B cell (primary cell): ENCODE measurements at regions of chr17 and their contacts with region 1.

Region 1: GRCh38 chr17:60077672-60078519 is 825 bp downstream of the HEATR6 start:
- DNase-seq: peak; percentile 60
- ATAC-seq: peak; percentile 52
- H3K4me3 ChIP-seq: peak overlapping the region; percentile 45 to 73 (median 61)
- H3K4me3 Mint-ChIP-seq: peak overlapping the region; percentile 94
- H3K27ac ChIP-seq: peak overlapping the region; percentile 55 to 65
- H3K27ac Mint-ChIP-seq: peak overlapping the region; percentile 93
- H3K4me1 ChIP-seq: peaks cover 27 to 32% of the 10 kb centered on the region in 2 donors
- H3K4me1 Mint-ChIP-seq: peaks cover 39% of the 10 kb centered on the region
- H3K27me3 ChIP-seq: no peaks in the 10 kb centered on the region
- H3K27me3 Mint-ChIP-seq: no peaks in the 10 kb centered on the region
- CTCF ChIP-seq: no peak

Region 2: DNA sequence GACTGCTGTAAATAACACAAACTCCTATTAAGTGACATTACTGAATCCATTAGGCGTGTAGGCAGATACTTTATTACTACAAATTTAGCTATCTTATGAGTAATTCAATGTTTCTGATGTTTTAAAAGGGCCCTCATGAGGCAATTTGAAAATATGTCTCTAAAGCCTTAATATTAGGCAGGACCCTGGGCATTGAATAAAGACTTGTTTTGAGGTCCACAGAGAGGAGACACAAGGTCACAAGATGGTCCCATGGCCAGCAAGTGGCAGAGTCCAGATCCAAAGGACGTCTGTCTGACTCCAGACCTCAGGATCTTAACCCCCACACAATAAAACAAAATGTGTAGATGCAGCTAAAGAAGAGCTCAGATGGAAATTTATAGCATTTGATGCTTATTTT is 32.7 kb after region 1 on chr17:
- CTCF ChIA-PET with region 1: interaction called, 12 read pairs
- POLR2A ChIA-PET with region 1: no interaction called
- intact Hi-C with region 1: no loop called
- DNase-seq: no peak
- ATAC-seq: no peak
- H3K4me3 ChIP-seq: no peak overlapping the region
- H3K4me3 Mint-ChIP-seq: no peak overlapping the region
- H3K27ac ChIP-seq: no peak overlapping the region
- H3K27ac Mint-ChIP-seq: no peak overlapping the region
- H3K4me1 ChIP-seq: peaks cover 12% of the 10 kb centered on the region in 2 donors
- H3K4me1 Mint-ChIP-seq: peaks cover 17% of the 10 kb centered on the region
- H3K27me3 ChIP-seq: no peaks in the 10 kb centered on the region
- H3K27me3 Mint-ChIP-seq: peaks cover 3% of the 10 kb centered on the region
- CTCF ChIP-seq: no peak

Region 3: DNA sequence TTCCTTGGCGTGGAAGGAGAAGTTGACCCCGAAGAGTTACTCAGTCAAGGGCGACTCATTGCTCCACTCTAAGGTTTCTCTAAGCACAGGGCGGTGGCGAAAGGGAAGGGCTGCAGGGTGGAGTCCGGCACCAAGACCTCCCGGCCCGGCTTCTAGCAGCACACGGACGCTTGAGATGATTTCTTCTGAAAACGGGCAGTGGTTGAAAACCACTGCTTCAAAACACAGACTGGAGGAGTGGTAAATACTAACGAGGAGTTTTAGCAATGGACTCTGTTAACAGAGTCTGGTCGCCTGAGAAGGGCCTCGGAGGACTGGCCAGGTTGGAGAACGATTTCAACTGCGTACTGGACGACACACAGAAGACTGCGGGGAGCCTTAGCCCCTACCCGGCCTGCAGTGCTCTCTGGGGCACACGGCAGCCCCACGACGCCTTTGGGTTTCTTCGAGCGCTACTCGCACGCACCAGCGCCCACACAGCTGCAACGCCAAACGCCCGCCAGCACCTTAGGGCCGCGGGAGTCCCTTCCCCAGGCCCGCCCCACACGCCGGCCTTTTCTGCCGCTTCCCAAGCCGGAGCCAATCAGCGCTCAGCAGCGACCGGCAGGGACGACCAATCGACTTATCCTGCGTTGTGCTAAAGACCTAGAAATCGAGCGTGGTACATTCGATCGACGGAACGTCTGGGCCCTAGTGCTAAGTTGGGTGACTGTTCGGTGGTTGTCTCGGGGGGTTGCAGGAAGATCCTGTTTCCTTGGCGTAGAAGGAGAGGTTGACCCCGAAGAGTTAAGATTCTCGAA is 57.5 kb after region 1 on chr17:
- CTCF ChIA-PET with region 1: no interaction called
- POLR2A ChIA-PET with region 1: interaction called, 8 read pairs
- intact Hi-C with region 1: loop called (anchors 10 kb)
- DNase-seq: peak; percentile 85
- ATAC-seq: peak; percentile 90
- H3K4me3 ChIP-seq: peak overlapping the region; percentile 59 to 85 (median 72)
- H3K4me3 Mint-ChIP-seq: peak overlapping the region; percentile 92
- H3K27ac ChIP-seq: no peak overlapping the region
- H3K27ac Mint-ChIP-seq: peak overlapping the region; percentile 85
- H3K4me1 ChIP-seq: peaks cover 28 to 36% of the 10 kb centered on the region in 2 donors
- H3K4me1 Mint-ChIP-seq: peaks cover 31% of the 10 kb centered on the region
- H3K27me3 ChIP-seq: peaks cover 0 to 25% (median 14%) of the 10 kb centered on the region in 4 experiments
- H3K27me3 Mint-ChIP-seq: peaks cover 6% of the 10 kb centered on the region
- CTCF ChIP-seq: no peak

Region 4: DNA sequence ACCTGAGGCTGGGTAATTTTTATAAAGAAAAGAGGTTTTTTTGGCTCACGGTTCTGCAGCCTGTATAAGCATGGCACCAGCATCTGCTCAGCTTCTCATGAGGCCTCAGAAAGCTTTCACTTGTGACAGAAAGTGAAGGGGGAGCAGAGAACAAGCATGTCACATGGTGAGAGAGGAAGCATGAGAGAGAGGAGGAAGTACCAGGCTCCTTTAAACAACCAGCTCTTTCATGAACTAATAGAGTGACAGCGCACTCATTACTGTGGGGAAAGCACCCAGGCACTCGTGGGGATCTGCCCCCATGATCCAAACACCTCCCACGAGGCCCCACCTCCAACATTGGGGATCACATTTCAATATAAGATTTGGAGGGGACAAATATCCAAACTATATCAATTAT is 227.2 kb after region 1 on chr17:
- CTCF ChIA-PET with region 1: no interaction called
- POLR2A ChIA-PET with region 1: no interaction called
- intact Hi-C with region 1: no loop called
- DNase-seq: peak; percentile 77
- ATAC-seq: peak; percentile 90
- H3K4me3 ChIP-seq: no peak overlapping the region
- H3K4me3 Mint-ChIP-seq: peak overlapping the region; percentile 64
- H3K27ac ChIP-seq: peak overlapping the region; percentile 4 to 63
- H3K27ac Mint-ChIP-seq: peak overlapping the region; percentile 71
- H3K4me1 ChIP-seq: peaks cover 6 to 13% of the 10 kb centered on the region in 2 donors
- H3K4me1 Mint-ChIP-seq: peaks cover 24% of the 10 kb centered on the region
- H3K27me3 ChIP-seq: no peaks in the 10 kb centered on the region
- H3K27me3 Mint-ChIP-seq: no peaks in the 10 kb centered on the region
- CTCF ChIP-seq: no peak

Region 5: DNA sequence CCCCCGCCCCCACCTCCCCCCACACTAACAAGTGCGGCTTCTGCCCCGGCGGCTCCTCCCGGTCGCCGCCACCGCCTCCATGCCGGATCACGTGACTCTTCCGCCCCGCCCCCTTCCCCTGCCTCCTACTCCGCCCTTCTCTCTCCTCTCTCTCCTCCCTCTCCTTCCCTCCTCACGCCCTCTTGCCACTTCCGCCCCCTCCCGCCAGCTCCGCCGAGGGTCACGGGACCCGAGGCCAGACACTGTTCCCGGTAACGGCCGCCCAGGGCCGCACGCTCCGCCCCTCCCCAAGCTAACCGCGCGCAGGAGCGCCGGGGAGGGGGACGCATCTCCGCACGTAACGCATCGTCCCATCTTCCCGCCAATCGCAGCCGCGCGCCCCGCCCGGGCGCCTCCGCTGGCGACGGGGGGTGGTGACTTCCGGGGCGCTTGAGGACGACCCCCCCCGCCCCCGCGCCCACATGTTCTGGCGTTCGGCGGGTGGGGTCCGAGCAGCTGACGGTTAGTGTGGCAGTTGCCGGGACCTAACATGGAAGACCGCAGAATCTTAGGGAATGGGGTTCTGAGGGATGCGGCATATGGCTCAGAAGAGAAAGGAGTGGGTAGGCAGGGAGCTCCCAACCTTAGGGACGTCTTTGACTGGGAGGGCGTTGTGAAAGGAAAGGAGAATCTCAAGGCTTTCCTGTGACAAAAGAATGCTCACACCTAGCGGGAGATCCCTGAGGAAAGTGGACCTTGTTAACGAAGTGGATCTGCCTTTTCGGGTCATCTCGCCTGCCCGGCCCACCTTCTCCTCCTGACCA is 314.3 kb after region 1 on chr17 and contains the start of gene USP32:
- CTCF ChIA-PET with region 1: no interaction called
- POLR2A ChIA-PET with region 1: interaction called, 3 read pairs
- intact Hi-C with region 1: loop called (anchors 1 kb)
- DNase-seq: peak; percentile 98
- ATAC-seq: peak; percentile 88
- H3K4me3 ChIP-seq: peak within 1 kb of the TSS; percentile 71 to 95 (median 87)
- H3K4me3 Mint-ChIP-seq: peak within 1 kb of the TSS; percentile 96
- H3K27ac ChIP-seq: peak within 1 kb of the TSS; percentile 92 to 96
- H3K27ac Mint-ChIP-seq: peak within 1 kb of the TSS; percentile 97
- H3K4me1 ChIP-seq: peaks cover 43 to 44% of the 10 kb centered on the region in 2 donors
- H3K4me1 Mint-ChIP-seq: peaks cover 67% of the 10 kb centered on the region
- H3K27me3 ChIP-seq: no peaks in the 10 kb centered on the region
- H3K27me3 Mint-ChIP-seq: no peaks in the 10 kb centered on the region
- CTCF ChIP-seq: no peak
- total RNA-seq, gene USP32: 48.8 and 56.9 TPM in 2 replicates